ENCODE measurements at regions of chr6 and their contacts with region 1.

Region 1: DNA sequence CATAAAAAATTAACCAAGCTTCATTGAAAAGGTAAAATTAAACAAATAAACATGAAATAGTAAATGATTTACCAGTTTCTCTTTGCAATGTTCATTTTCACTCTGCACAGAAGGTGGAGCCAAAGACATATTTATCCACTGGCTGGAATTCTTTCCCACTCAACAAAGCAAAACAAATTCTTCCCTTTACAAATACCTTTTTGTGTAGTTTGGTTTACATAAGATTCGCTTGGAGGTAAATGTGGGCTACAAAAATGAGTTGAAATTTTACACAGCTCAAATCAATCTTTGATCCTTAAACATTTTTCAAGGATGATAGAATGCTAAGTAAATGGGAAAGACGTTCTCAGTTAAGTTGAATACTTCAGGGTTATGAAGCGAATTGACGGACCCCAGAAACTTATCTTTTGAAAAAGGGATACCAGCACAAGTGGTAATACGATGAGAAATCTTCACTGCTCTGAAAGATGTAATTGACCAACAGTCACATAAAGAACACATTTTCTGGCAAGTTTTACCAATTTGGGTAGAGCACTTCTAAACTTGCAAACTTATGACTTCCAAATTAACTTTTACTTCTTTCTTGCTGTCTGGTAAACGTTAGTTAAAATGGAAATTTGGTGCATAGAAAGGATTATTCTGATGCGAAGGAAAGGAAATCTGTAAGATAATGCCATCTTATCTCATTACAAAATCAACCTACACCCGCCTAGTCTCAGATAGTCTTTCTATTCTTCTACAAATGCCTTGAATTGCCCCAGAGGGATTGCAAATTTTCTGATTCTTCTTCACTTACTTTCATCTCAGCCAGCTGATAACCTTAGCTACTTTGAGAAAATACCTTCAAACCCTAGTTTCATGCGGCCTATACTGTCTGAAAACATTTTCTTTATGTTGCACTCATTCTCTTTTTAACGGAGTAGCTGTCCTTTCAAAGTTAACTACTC is 4.7 kb upstream of the GJA1 start:
- DNase-seq: no peak
- ATAC-seq: peak in 2 of 8 donors; percentile 43 to 48
- H3K4me3 ChIP-seq: peak overlapping the region in 2 of 10 donors; percentile 8 to 14
- H3K27ac ChIP-seq: peak overlapping the region in 4 of 10 donors; percentile 6 to 32 (median 26)
- H3K4me1 ChIP-seq: peaks cover 0 to 24% (median 8%) of the 10 kb centered on the region in 9 donors
- H3K27me3 ChIP-seq: peaks cover 0 to 3% (median 0%) of the 10 kb centered on the region in 7 donors
- CTCF ChIP-seq: peak; percentile 44 to 89 (median 66)

Region 2: GRCh38 chr6:121548131-121548530 is 117.3 kb after region 1 on chr6:
- intact Hi-C with region 1: no loop called
- DNase-seq: no peak
- ATAC-seq: no peak
- H3K4me3 ChIP-seq: no peak overlapping the region
- H3K27ac ChIP-seq: no peak overlapping the region
- H3K4me1 ChIP-seq: no peaks in the 10 kb centered on the region
- H3K27me3 ChIP-seq: no peaks in the 10 kb centered on the region
- CTCF ChIP-seq: no peak

Region 3: DNA sequence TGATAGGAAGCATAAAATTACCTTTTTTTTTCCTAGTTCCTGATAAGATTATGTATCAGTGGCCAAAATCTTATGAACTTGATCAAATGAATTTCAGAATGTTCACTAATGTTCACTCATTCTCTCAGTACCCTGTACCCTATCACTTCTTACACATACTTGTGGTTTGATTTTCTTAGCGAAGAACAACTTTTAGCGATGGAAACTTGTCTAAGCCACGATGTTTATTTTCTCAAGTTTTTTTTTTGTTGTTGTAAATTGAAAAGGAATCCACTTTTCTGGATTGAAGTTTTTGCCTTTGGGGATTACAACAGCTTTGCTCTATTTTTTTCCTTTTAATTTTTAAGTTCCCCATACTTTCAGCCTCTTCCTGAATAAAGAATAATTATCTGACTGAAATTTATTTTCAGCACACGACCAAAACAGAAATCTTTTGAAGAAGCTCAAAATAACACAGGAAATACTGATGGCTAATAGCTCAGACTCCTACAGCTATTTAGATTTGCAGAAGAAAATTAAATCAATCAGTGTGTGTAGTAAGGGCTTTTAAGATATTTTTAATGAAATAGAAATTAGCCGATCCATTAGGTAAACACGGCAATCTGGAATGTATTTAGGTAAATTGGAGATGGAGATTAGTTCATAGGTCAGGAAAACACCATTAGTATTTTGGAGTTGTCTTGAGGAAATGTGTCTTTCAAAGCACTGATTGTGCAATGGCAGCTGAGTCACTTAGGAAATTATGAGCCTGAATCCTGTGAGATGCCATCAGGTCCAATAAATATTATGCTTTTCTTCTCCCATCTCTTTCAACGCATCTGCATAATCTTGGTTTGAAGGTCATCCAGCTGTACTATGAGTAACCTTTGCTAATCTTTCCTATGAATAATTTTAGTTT is 222.2 kb after region 1 on chr6:
- intact Hi-C with region 1: loop called in 4 of 10 experiments (anchors 5 to 10 kb)
- DNase-seq: no peak
- ATAC-seq: peak in 6 of 8 donors; percentile 26 to 80 (median 58)
- H3K4me3 ChIP-seq: no peak overlapping the region
- H3K27ac ChIP-seq: peak overlapping the region; percentile 3 to 82 (median 64)
- H3K4me1 ChIP-seq: peaks cover 0 to 27% (median 4%) of the 10 kb centered on the region in 9 donors
- H3K27me3 ChIP-seq: no peaks in the 10 kb centered on the region
- CTCF ChIP-seq: no peak

Region 4: DNA sequence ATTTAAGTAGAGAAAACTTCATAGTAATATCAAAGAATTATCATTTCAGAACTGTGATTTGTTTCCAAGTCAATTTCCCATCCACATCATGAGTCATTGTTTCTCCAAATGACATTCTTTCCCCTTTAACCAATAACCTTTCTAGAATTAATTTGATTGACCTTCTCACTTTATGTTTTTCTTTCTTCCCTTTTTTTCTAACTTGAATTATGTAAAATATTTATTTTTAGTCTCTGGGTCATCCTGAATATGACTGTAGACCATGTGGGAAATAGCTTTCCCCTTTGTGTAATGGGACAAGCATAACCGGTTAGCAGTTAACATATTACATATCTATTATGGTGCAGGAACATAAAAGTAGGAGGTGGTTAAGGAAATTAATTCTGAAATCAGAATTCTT is 295.8 kb after region 1 on chr6:
- intact Hi-C with region 1: loop called in 1 of 10 experiments (anchors 10 kb)
- DNase-seq: no peak
- ATAC-seq: peak in 2 of 8 donors; percentile 47 to 61
- H3K4me3 ChIP-seq: no peak overlapping the region
- H3K27ac ChIP-seq: peak overlapping the region in 4 of 10 donors; percentile 6 to 38 (median 14)
- H3K4me1 ChIP-seq: peaks cover 0 to 29% (median 0%) of the 10 kb centered on the region in 9 donors
- H3K27me3 ChIP-seq: no peaks in the 10 kb centered on the region
- CTCF ChIP-seq: no peak

Region 5: DNA sequence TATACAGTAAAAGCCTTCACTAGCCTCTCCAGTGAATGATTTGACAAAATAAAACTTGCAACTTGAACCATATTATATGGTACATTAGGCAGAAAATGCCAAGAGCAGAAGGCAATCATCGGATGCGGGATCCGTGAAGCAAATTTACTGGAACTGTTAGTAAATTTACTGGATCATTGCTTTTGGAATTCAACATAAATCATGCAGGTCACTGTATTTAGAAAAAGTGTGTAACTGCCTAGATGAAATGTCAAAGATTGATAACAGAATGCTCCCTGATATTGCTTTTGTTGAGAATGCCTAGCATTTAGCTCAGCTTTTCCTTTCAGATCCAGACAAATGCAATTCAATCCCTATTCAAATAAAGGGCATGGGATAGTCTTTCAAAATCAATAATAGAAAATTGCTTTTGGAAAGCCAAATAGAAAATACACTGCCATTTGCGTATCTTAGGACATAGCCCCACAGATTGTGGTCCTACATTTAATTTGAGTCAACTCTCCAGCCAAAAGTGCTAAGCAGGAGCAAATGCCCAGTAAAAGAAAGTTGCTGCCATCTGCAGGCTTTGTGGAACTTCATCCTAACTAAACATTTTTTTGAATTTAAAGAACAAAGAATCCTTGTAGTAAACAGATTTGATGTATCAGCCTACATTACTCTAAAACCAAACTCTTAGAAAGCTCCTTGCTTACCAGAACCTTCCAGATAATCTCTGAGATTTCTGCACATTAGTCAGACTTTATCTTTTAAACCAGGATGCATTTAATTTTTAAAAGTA is 859.2 kb after region 1 on chr6:
- intact Hi-C with region 1: loop called in 3 of 10 experiments (anchors 2 to 10 kb)
- DNase-seq: no peak
- ATAC-seq: no peak
- H3K4me3 ChIP-seq: no peak overlapping the region
- H3K27ac ChIP-seq: no peak overlapping the region
- H3K4me1 ChIP-seq: peaks cover 0 to 4% (median 0%) of the 10 kb centered on the region in 9 donors
- H3K27me3 ChIP-seq: no peaks in the 10 kb centered on the region
- CTCF ChIP-seq: peak in 6 of 9 donors; percentile 15 to 46 (median 44)